ENCODE measurements at regions of chr1 and their contacts with region 1.

Region 1: GRCh38 chr1:204207136-204207616 is 6.6 kb downstream of the GOLT1A start:
- DNase-seq: no peak
- H3K4me3 ChIP-seq: no peak overlapping the region
- CTCF ChIP-seq: peak; percentile 94

Region 2: DNA sequence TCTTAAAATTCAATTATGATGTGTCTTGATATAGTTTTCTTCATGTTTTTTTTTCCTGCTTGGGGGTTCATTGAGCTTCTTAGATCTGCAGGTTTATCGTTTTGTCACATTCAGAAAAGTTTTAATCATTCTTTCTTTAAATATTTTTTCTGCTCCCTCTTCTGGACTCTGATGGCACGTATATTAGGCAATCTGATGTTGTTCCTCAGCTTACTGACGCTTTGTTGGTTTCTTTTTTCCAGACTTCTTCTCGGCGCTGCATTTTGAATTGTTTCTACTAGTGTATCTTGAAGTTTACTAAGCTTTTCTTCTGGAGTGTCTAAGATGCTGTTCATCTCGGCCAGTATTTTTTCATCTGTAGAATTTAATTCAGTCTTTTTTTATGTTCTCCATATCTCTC is 811.4 kb before region 1 on chr1:
- CTCF ChIA-PET with region 1: no interaction called
- POLR2A ChIA-PET with region 1: no interaction called
- DNase-seq: no peak
- H3K4me3 ChIP-seq: no peak overlapping the region
- CTCF ChIP-seq: no peak

Region 3: GRCh38 chr1:203733009-203733863 is 473.9 kb before region 1 on chr1:
- CTCF ChIA-PET with region 1: no interaction called
- POLR2A ChIA-PET with region 1: no interaction called
- DNase-seq: no peak
- H3K4me3 ChIP-seq: no peak overlapping the region
- CTCF ChIP-seq: no peak

Region 4: GRCh38 chr1:203861379-203862184 is 345.6 kb before region 1 on chr1 and contains the start of gene SNRPE:
- CTCF ChIA-PET with region 1: interaction called, 40 read pairs
- POLR2A ChIA-PET with region 1: no interaction called
- DNase-seq: peak; percentile 82
- H3K4me3 ChIP-seq: peak within 1 kb of the TSS; percentile 100
- CTCF ChIP-seq: peak; percentile 98

Region 5: DNA sequence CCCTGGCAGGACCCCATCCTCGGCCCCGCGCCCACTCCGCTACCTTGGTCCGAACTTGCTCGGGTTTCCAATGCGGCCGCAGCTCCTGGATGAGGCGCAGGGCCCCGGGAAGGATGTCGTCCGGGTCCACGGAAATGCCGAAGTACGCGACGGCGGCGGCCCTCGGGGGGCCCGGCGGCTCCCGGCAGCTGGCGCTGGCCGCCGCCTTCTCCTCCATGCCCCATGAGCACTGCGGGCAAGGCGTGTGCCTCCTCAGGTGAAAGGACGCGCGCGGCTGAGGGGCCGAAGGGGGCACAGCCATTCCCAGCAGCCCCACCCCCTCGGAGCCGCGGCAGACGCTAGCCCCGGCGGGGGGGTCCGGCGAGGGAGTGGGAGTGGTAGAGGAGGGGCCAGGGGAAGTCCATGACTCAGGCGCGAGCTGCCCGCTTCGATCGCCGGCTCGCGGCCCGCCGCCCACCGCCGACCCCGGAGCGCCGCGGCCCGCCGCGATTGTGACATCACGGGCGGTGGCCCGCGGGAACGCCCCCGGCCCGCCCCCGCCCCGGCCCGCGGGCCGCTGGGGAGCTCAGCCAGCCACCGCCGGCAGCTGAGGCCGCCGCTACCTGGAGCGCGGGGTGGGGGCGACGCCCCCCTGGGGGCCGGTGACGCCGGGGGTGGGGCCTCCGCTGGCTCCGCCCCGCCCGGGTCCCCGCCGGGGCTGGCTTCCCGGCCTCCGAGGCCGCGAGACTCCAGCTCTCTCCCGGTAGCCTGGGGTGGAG is 55.4 kb before region 1 on chr1 and contains the start of gene ETNK2:
- CTCF ChIA-PET with region 1: interaction called, 30 read pairs
- POLR2A ChIA-PET with region 1: no interaction called
- DNase-seq: no peak
- H3K4me3 ChIP-seq: peak within 1 kb of the TSS; percentile 66
- CTCF ChIP-seq: no peak

Region 6: GRCh38 chr1:204190212-204191211 is 16.7 kb before region 1 on chr1:
- CTCF ChIA-PET with region 1: interaction called, 112 read pairs
- POLR2A ChIA-PET with region 1: no interaction called
- DNase-seq: no peak
- H3K4me3 ChIP-seq: no peak overlapping the region; the same call in 1 of the 2 replicates
- CTCF ChIP-seq: no peak

Region 7: DNA sequence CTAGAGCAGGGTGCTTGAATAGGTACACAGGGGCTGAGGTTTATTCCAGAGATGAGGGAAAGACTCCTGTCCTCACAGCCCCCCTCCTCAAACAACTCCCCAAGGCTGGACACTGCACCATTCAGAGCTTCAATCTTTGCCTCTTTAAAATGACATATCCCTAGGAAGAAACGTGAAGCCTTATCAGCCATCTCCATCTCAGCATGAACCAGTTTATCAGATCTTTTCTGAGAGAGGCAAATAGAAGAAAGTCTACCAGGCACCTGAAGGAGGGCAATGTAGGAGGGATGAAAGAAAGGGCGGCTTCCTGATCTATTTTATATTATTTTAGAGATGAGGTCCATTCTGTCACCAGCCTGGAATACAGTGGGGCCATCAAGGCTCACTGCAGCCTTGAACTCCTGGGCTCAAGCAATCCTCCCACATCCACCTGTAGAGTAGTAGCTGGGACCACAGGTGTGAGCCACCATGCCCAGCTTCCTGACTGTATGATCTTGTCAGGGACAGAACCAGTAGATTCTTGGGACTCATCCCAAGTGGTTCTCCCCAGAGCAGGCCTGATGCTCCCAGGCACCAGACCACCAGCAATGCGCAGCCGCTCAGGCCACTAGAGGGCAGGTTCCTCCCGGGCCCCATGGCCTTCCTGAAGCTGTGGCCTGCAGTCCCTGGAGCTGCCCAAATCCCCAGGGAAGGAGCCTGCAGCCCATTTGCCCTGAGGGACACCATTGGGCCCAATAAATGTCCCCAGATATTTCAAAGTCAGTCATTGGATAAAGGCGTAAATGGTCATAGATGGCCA is 51.0 kb after region 1 on chr1:
- CTCF ChIA-PET with region 1: interaction called, 27 read pairs
- POLR2A ChIA-PET with region 1: no interaction called
- DNase-seq: no peak
- H3K4me3 ChIP-seq: no peak overlapping the region
- CTCF ChIP-seq: peak; percentile 86

Region 8: GRCh38 chr1:204341380-204341779 is 134.2 kb after region 1 on chr1:
- CTCF ChIA-PET with region 1: interaction called, 24 read pairs
- POLR2A ChIA-PET with region 1: no interaction called
- DNase-seq: peak; percentile 33
- H3K4me3 ChIP-seq: no peak overlapping the region
- CTCF ChIP-seq: no peak

Region 9: DNA sequence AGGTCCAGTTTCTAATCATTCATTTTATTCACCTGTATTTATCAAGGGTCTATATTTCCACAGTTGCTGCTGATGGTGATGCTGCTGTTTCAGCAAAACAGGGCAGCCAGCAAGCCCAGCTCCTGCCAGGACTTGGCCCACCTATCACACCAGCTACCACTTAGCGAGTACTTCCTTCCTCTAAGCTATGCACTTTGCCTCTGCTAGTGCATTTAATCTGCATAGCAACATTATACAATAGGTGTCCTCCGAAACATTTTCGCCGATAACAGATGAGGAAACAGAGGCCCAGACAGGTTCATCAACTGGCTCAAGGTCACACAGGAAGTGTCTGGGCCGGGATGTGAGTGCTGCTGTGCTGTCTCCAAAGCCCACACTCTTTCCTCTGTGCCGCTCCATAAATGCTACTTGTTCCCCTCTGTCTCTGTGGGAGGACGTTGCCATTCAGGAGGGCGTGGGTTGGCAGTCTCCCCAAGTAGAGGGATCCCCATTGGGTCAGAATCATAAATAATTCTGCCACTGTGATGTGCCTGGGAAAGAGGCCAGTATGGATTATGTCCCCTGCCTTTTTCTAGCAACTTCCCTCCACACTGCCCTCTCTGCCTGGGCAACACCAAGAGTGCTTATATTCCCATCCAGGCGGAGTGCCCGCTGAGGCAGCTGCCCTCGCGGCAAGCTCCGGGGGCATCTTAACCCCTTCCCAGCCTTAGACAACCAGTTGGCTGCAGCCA is 162.0 kb after region 1 on chr1:
- CTCF ChIA-PET with region 1: interaction called, 124 read pairs
- POLR2A ChIA-PET with region 1: no interaction called
- DNase-seq: no peak
- H3K4me3 ChIP-seq: no peak overlapping the region
- CTCF ChIP-seq: no peak